PC-3 (cell line): ENCODE measurements at regions of chr5 and their contacts with region 1.

Region 1: GRCh38 chr5:55534436-55535198 is at the start of gene PLPP1:
- DNase-seq: peak; percentile 73
- ATAC-seq: peak; percentile 81
- H3K4me3 ChIP-seq: peak within 1 kb of the TSS; percentile 86
- H3K27ac ChIP-seq: peak within 1 kb of the TSS; percentile 28
- H3K4me1 ChIP-seq: peaks cover 5% of the 10 kb centered on the region; the same call in 1 of the 2 replicates
- H3K27me3 ChIP-seq: no peaks in the 10 kb centered on the region
- CTCF ChIP-seq: no peak
- total RNA-seq, gene PLPP1: 16.2 and 21.1 TPM in 2 replicates

Region 2: GRCh38 chr5:55286411-55286933 is 248.1 kb before region 1 on chr5:
- CTCF ChIA-PET with region 1: no interaction called
- POLR2A ChIA-PET with region 1: no interaction called
- intact Hi-C with region 1: no loop called
- DNase-seq: no peak
- ATAC-seq: no peak
- H3K4me3 ChIP-seq: no peak overlapping the region
- H3K27ac ChIP-seq: no peak overlapping the region
- H3K4me1 ChIP-seq: no peaks in the 10 kb centered on the region
- H3K27me3 ChIP-seq: no peaks in the 10 kb centered on the region
- CTCF ChIP-seq: no peak

Region 3: GRCh38 chr5:55407059-55407684 is 127.4 kb before region 1 on chr5:
- CTCF ChIA-PET with region 1: no interaction called
- POLR2A ChIA-PET with region 1: no interaction called
- intact Hi-C with region 1: loop called (anchors 5 kb)
- DNase-seq: peak; percentile 42
- ATAC-seq: peak; percentile 67
- H3K4me3 ChIP-seq: no peak overlapping the region
- H3K27ac ChIP-seq: no peak overlapping the region
- H3K4me1 ChIP-seq: no peaks in the 10 kb centered on the region
- H3K27me3 ChIP-seq: no peaks in the 10 kb centered on the region
- CTCF ChIP-seq: peak; percentile 75

Region 4: GRCh38 chr5:55601204-55601618 is 66.6 kb after region 1 on chr5:
- CTCF ChIA-PET with region 1: no interaction called
- POLR2A ChIA-PET with region 1: no interaction called
- intact Hi-C with region 1: loop called (anchors 2 kb)
- DNase-seq: peak; percentile 85
- ATAC-seq: peak; percentile 87
- H3K4me3 ChIP-seq: peak overlapping the region; percentile 51; the same call in 1 of the 2 replicates
- H3K27ac ChIP-seq: peak overlapping the region; percentile 95
- H3K4me1 ChIP-seq: peaks cover 53% of the 10 kb centered on the region
- H3K27me3 ChIP-seq: no peaks in the 10 kb centered on the region
- CTCF ChIP-seq: no peak

Region 5: GRCh38 chr5:55650386-55650785 is 115.8 kb after region 1 on chr5:
- CTCF ChIA-PET with region 1: no interaction called
- POLR2A ChIA-PET with region 1: no interaction called
- intact Hi-C with region 1: loop called (anchors 10 kb)
- DNase-seq: peak; percentile 27
- ATAC-seq: peak; percentile 53
- H3K4me3 ChIP-seq: no peak overlapping the region
- H3K27ac ChIP-seq: no peak overlapping the region
- H3K4me1 ChIP-seq: no peaks in the 10 kb centered on the region
- H3K27me3 ChIP-seq: no peaks in the 10 kb centered on the region
- CTCF ChIP-seq: no peak